Activated naive CD4-positive, alpha-beta T cell treated with anti-CD3 and anti-CD28 coated beads, Interleukin-2, amount 10 ng/mL, durations not matched to agents 7 days and 5 days (primary cell): ENCODE measurements at regions of chr12 and their contacts with region 1.

Region 1: DNA sequence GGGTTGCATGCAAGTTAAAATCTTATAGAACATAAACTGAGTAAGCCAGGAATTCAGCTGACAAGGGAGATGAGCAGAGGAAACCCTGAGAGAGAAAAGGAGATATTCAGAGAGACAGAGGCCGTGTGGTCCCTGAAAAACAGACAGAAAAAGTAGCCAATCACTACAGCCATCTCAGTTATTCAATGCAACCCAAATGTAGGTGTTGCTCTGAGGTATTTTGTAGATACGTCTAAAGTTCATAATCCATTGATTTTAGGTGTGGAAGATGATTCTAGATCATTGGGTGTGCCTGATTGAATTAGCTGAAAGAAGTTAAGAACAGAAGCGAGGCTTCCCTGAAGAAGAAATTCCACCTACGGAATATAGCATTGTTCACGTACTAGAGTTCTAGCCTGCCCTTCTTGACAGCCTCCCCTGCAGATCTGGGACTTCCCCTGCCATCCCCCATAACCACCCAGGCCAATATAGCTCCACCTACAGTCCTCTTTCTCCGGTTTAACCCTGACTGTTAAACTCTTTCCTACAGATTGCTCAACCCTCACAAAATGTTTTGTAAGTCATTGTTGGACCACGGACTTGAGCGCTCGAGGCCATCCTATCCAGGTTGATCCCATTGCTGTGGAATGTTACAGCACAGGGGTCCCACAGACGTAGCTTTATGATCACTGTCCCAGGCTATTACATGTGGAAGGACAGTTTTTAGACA is 21.7 kb downstream of the AICDA start:
- DNase-seq: no peak
- H3K4me3 Mint-ChIP-seq: no peak overlapping the region
- H3K27ac Mint-ChIP-seq: no peak overlapping the region
- H3K4me1 Mint-ChIP-seq: no peaks in the 10 kb centered on the region
- H3K27me3 Mint-ChIP-seq: no peaks in the 10 kb centered on the region

Region 2: GRCh38 chr12:8508910-8509847 is 81.8 kb before region 1 on chr12:
- CTCF ChIA-PET with region 1: no interaction called
- DNase-seq: no peak
- H3K4me3 Mint-ChIP-seq: no peak overlapping the region
- H3K27ac Mint-ChIP-seq: no peak overlapping the region
- H3K4me1 Mint-ChIP-seq: no peaks in the 10 kb centered on the region
- H3K27me3 Mint-ChIP-seq: peaks cover 53% of the 10 kb centered on the region

Region 3: GRCh38 chr12:8609061-8609570 is 18.1 kb after region 1 on chr12:
- CTCF ChIA-PET with region 1: interaction called, 14 read pairs
- DNase-seq: peak; percentile 26
- H3K4me3 Mint-ChIP-seq: peak overlapping the region; percentile 50
- H3K27ac Mint-ChIP-seq: no peak overlapping the region
- H3K4me1 Mint-ChIP-seq: peaks cover 11% of the 10 kb centered on the region
- H3K27me3 Mint-ChIP-seq: peaks cover 30% of the 10 kb centered on the region